ENCODE measurements at regions of chr9 and their contacts with region 1.

Region 1: GRCh38 chr9:131762356-131762932 is 22.6 kb upstream of the RAPGEF1 start:
- DNase-seq: peak; percentile 94
- CTCF ChIP-seq: peak; percentile 91

Region 2: DNA sequence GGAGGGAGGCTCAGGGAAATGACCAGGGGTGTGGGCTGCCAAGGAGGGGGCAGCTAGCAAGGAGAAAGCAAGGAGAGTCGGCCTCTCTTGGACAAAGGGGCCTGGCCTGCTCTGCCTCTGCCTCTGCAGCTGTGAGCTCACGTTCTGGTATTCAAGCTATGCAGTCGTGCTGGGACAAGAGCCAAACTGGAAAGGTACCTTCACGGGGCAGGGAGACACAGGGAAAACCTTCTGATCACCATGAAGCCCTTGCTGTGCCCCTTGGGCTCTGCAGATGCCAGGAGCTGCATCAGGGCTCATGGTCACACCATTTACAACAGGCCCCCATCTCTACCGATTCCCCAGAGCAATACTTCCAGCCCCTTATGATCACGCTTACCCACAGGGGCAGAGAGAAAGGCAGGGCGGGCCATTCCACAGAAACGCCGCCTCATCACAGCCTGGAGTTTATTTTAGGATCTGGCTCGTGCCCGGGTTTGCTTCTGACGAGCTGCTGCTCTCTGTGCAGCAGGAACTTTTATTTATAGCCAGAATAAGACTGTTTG is 153.9 kb before region 1 on chr9:
- in situ Hi-C with region 1: no loop called
- DNase-seq: no peak
- CTCF ChIP-seq: no peak

Region 3: DNA sequence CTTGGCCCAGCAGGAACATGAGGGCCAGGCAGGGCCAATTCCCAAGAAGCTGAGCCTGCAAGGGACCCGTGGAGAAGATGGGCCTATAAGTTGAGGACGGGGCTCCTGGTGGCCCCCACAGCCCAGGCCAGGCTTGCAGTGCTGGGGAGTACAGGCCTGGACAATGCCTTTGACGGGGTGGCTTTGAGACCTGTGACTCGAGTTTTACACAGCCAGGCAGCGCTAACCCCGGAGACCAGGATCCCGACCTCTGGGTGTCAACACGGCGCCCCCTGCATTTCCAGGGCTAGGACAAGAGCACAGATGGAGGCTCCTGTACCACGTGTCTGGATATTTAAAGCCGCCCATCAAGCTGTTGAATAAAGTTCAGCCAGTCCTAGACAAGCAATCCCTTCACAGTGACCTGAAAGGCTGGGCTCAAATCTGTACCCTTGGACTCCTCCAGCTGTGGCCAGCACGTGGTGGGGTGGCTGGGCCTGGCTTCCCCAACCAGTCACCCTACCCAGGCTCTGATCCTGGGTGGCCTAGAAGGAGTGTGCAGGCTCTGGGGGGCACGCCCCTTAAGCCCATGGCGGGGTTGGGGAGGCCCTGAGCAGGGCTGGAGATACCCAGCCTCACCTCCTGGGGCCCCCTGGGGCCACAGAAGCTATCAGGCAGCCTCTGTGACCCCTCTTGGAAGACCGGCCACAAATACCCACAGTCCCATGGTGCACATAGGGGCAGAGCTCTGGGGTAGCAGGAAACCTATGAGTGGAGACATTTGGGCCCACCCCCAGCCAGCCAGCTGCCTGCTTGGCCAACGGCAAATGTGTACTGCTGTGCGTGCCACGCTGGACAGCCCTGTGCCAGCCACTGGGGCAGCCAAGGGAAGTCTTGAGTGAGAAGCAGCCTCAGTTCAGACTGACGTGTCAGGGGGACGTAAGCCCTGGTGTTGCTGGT is 488.1 kb after region 1 on chr9:
- in situ Hi-C with region 1: loop called (anchors 10 kb)
- DNase-seq: no peak
- CTCF ChIP-seq: no peak